B cell (primary cell): ENCODE measurements at regions of chr1 and their contacts with region 1.

Region 1: DNA sequence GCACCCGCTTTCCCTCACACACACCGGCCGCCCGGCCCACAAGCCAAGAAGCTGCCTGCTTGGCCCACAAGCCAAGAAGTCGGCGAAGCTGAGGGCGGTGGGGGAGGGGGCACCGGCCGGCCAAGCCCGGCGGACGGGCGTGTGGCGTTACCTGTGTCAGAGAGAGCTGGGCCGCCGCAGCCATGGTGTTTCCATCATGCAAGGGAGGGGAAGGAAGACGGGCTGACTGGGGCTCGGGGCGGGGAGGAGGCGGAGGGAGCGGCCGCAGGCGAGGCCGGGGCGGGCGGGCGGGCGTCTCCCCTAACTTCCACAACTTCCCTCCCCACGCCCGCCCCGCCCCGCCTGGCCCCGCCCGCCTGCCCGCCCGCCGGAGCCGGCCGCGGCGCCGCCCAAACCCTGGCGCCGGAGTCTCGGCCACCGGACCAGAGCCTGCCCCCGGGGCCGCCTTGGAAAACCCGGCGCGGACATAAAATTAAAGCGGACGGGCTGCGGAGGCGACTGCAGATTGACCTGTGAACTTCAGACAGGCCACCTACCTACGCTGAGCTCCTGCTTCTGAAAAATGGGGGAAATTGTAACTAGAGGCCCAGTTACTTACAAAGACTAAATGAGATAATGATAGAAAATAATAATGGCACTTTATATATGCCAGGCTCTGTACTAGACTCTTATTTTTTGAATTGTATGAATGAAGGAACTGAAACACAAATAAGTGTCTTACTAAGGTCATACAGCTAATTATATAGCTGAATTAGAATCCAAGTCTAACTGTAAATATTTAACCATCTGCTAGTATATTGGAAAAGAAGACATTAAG is at the start of gene EPS15:
- DNase-seq: peak; percentile 88
- ATAC-seq: peak; percentile 75
- H3K4me3 ChIP-seq: peak within 1 kb of the TSS; percentile 65 to 93 (median 78)
- H3K4me3 Mint-ChIP-seq: peak within 1 kb of the TSS; percentile 96
- H3K27ac ChIP-seq: peak within 1 kb of the TSS; percentile 67 to 88
- H3K27ac Mint-ChIP-seq: peak within 1 kb of the TSS; percentile 91
- H3K4me1 ChIP-seq: peaks cover 31 to 38% of the 10 kb centered on the region in 2 donors
- H3K4me1 Mint-ChIP-seq: peaks cover 54% of the 10 kb centered on the region
- H3K27me3 ChIP-seq: no peaks in the 10 kb centered on the region
- H3K27me3 Mint-ChIP-seq: no peaks in the 10 kb centered on the region
- CTCF ChIP-seq: no peak
- total RNA-seq, gene EPS15: 151 and 163 TPM in 2 replicates

Region 2: DNA sequence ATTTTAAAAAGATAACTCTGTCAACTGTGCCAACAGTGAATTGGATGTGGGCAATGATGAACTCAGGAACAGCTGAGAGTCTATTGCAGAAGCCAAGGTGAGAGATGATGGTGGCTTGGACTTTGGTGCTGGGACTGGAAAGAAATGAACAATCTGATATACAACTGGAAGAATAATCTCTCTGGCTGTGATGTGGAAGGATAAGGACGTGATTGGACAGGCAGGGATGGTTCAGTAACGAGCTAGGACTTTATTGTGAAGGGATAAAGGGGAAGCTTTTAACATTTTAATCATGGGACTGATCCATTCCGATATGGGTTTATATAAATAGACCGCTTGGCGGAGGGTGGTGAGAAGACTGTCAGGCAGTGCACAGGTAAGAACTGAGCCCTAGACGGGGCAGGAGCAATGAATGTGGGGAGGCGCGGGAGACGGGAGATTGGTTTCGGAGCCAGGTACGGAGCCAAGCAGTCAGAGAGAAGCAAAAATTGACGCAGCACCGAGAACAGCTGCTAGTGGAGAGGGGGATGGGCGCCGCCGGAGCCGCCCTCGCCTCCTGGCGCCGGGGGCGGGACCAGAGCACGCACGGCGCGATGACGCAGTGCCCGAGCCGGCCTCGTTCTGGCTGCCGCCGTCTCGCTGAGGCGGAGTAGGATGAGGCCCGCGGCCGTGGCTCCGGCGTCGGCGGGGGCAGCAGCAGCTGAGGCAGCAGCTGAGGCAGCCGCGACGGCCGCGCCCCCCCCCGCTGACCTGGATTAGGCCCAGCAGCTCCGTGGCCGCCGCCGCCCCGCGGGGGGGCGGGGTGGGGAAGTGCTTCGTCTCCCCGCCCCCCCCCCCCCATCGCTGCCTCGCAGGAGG is 283.4 kb before region 1 on chr1 and contains the start of gene RNF11:
- CTCF ChIA-PET with region 1: interaction called, 3 read pairs
- POLR2A ChIA-PET with region 1: no interaction called
- intact Hi-C with region 1: loop called (anchors 5 kb)
- DNase-seq: peak; percentile 95
- ATAC-seq: peak; percentile 73
- H3K4me3 ChIP-seq: peak within 1 kb of the TSS; percentile 69 to 96 (median 86)
- H3K4me3 Mint-ChIP-seq: peak within 1 kb of the TSS; percentile 94
- H3K27ac ChIP-seq: peak within 1 kb of the TSS; percentile 58 to 80
- H3K27ac Mint-ChIP-seq: peak within 1 kb of the TSS; percentile 94
- H3K4me1 ChIP-seq: peaks cover 29 to 39% of the 10 kb centered on the region in 2 donors
- H3K4me1 Mint-ChIP-seq: peaks cover 34% of the 10 kb centered on the region
- H3K27me3 ChIP-seq: peaks cover 0 to 6% (median 1%) of the 10 kb centered on the region in 4 experiments
- H3K27me3 Mint-ChIP-seq: peaks cover 8% of the 10 kb centered on the region
- CTCF ChIP-seq: no peak
- total RNA-seq, gene RNF11: 17.6 and 20.6 TPM in 2 replicates

Region 3: DNA sequence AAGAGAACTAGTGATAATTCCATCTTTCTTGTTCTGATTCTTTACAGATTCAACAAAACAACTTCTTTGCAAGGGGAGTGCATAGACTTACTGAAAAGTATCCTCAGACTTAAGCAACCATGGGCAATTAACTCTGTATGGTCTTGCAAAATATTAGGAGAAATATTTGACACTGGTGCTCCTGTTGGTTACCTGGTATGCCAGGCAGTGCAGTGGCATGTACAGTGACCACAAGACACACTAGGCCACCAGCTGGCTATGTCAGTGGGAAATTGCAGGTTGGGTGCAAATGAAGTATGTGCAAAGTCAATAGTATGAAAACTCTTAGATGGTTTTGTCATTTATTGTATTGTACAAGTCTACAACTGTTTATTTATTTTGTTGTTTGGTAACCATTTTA is 34.7 kb before region 1 on chr1:
- CTCF ChIA-PET with region 1: interaction called, 5 read pairs
- POLR2A ChIA-PET with region 1: no interaction called
- intact Hi-C with region 1: loop called (anchors 5 kb)
- DNase-seq: no peak
- ATAC-seq: no peak
- H3K4me3 ChIP-seq: no peak overlapping the region
- H3K4me3 Mint-ChIP-seq: no peak overlapping the region
- H3K27ac ChIP-seq: no peak overlapping the region
- H3K27ac Mint-ChIP-seq: no peak overlapping the region
- H3K4me1 ChIP-seq: peaks cover 7 to 10% of the 10 kb centered on the region in 2 donors
- H3K4me1 Mint-ChIP-seq: peaks cover 33% of the 10 kb centered on the region
- H3K27me3 ChIP-seq: no peaks in the 10 kb centered on the region
- H3K27me3 Mint-ChIP-seq: no peaks in the 10 kb centered on the region
- CTCF ChIP-seq: no peak

Region 4: DNA sequence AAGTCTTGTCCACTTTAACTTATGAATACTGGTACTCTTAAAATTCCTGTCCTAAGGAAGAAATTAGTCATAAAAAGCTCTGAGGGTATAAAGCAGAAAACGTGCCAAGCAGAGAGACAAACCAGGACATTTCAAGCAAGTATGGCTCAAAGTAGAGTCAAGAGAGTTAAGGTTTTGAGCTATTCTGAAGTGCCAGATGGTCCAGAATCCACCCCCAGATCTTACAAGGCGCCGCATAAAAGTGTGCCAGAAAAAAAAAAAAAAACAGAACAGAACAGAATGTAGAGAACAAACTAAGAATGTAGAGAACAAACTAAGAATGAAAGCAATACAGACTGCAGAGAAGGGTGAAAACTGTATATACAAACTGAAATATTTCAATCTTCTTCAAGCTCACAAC is 12.7 kb before region 1 on chr1:
- CTCF ChIA-PET with region 1: interaction called, 8 read pairs
- POLR2A ChIA-PET with region 1: interaction called, 9 read pairs
- intact Hi-C with region 1: loop called (anchors 1 kb)
- DNase-seq: peak; percentile 50
- ATAC-seq: peak; percentile 10
- H3K4me3 ChIP-seq: no peak overlapping the region
- H3K4me3 Mint-ChIP-seq: peak overlapping the region; percentile 40
- H3K27ac ChIP-seq: peak overlapping the region in 1 of 2 donors; percentile 70
- H3K27ac Mint-ChIP-seq: peak overlapping the region; percentile 47
- H3K4me1 ChIP-seq: peaks cover 37 to 41% of the 10 kb centered on the region in 2 donors
- H3K4me1 Mint-ChIP-seq: peaks cover 69% of the 10 kb centered on the region
- H3K27me3 ChIP-seq: no peaks in the 10 kb centered on the region
- H3K27me3 Mint-ChIP-seq: no peaks in the 10 kb centered on the region
- CTCF ChIP-seq: no peak

Region 5: DNA sequence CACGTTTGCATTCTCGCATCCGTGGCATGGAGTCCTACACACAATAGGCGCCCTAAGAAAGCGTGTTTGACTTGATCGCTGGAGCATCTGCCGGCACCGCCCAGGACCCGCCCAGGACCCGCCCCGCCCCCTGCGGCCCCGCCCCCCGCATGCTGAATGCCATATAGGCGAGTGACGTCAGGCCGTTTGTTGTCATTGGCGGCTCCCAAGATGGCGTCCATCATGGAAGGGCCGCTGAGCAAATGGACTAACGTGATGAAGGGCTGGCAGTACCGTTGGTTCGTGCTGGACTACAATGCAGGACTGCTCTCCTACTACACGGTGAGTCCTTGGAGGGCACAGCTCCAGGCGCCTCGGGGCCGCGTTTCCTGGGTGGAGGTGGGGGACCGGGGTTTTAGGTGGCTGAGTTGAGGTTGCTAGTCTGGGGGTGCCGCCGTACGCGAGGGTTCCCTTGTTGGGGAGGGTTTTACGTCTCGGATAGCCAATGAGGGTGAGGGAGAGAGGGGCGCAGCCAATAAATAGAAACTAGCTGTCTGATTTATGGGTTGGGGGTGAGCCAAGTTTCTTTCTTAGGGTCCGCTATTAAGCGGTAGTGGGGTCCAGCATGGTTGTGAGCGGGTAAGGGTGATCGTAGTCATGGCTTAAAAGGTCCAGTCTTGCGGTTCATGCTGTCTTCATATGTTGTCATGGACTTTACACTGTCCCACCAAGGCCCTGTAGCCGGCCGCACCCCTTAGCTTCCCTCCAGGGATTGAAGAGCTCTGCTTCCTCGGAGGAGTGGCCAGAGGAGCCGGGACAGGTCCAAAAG is 97.8 kb after region 1 on chr1 and contains the start of gene OSBPL9:
- CTCF ChIA-PET with region 1: no interaction called
- POLR2A ChIA-PET with region 1: no interaction called
- intact Hi-C with region 1: loop called (anchors 1 kb)
- DNase-seq: peak; percentile 92
- ATAC-seq: peak; percentile 98
- H3K4me3 ChIP-seq: peak within 1 kb of the TSS; percentile 87 to 93 (median 90)
- H3K4me3 Mint-ChIP-seq: peak within 1 kb of the TSS; percentile 100
- H3K27ac ChIP-seq: peak within 1 kb of the TSS; percentile 65 to 85
- H3K27ac Mint-ChIP-seq: peak within 1 kb of the TSS; percentile 99
- H3K4me1 ChIP-seq: peaks cover 11 to 19% of the 10 kb centered on the region in 2 donors
- H3K4me1 Mint-ChIP-seq: peaks cover 32% of the 10 kb centered on the region
- H3K27me3 ChIP-seq: no peaks in the 10 kb centered on the region
- H3K27me3 Mint-ChIP-seq: no peaks in the 10 kb centered on the region
- CTCF ChIP-seq: no peak
- total RNA-seq, gene OSBPL9: 59.6 and 63.8 TPM in 2 replicates